Activated CD4-positive, alpha-beta T cell treated with anti-CD3 and anti-CD28 coated beads for 36 hours (primary cell): ENCODE measurements at regions of chr4 and their contacts with region 1.

Region 1: DNA sequence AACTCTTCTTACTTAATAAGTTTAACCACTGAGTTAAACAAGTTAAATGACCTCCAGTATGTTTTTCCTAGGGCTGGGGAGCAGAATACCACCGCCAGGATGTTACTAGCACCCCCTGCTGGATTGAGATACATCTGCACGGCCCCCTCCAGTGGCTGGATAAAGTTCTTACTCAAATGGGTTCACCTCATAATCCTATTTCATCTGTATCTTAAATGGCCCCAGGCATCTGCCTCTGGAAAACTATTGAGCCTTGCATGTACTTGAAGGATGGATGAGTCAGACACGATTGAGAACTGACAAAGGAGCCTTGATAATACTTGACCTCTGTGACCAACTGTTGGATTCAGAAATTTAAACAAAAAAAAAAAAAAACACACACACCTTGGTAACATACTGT is 61.5 kb upstream of the MMAA start:
- DNase-seq: peak; percentile 78
- ATAC-seq: peak; percentile 91
- H3K4me3 Mint-ChIP-seq: no peak overlapping the region
- H3K27ac Mint-ChIP-seq: no peak overlapping the region
- H3K4me1 Mint-ChIP-seq: peaks cover under 1% of the 10 kb centered on the region
- H3K27me3 Mint-ChIP-seq: no peaks in the 10 kb centered on the region

Region 2: GRCh38 chr4:144174401-144175067 is 1383.2 kb before region 1 on chr4:
- CTCF ChIA-PET with region 1: no interaction called
- POLR2A ChIA-PET with region 1: no interaction called
- intact Hi-C with region 1: loop called in 1 of 2 experiments (anchors 5 kb)
- DNase-seq: peak; percentile 42
- ATAC-seq: peak; percentile 84
- H3K4me3 Mint-ChIP-seq: no peak overlapping the region
- H3K27ac Mint-ChIP-seq: peak overlapping the region; percentile 72
- H3K4me1 Mint-ChIP-seq: peaks cover 17% of the 10 kb centered on the region
- H3K27me3 Mint-ChIP-seq: peaks cover 3% of the 10 kb centered on the region

Region 3: DNA sequence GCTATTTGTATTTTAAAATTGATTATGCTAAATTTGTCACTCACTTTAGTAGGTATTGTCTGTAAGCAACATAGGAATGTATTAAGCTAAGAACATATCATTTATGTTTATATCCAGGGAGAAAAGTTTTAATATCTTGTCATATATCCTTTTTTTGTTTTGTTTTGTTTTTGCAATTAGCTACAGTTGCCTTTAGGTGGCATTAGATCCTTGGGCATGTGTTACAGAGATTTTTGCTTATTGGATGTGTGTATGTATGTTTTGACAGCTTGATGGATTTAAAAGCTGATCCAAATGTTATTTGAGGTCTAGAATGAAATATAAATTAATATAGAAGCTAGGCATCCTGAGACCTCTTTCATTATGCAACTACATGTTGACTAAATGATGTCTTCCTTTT is 341.2 kb before region 1 on chr4:
- CTCF ChIA-PET with region 1: interaction called, 4 read pairs
- POLR2A ChIA-PET with region 1: no interaction called
- intact Hi-C with region 1: loop called (anchors 5 kb)
- DNase-seq: no peak
- ATAC-seq: no peak
- H3K4me3 Mint-ChIP-seq: no peak overlapping the region
- H3K27ac Mint-ChIP-seq: no peak overlapping the region
- H3K4me1 Mint-ChIP-seq: no peaks in the 10 kb centered on the region
- H3K27me3 Mint-ChIP-seq: no peaks in the 10 kb centered on the region

Region 4: GRCh38 chr4:145234091-145234706 is 323.5 kb before region 1 on chr4:
- CTCF ChIA-PET with region 1: interaction called, 22 read pairs
- POLR2A ChIA-PET with region 1: no interaction called
- intact Hi-C with region 1: loop called (anchors 1 kb)
- DNase-seq: peak; percentile 78
- ATAC-seq: peak; percentile 98
- H3K4me3 Mint-ChIP-seq: no peak overlapping the region
- H3K27ac Mint-ChIP-seq: no peak overlapping the region
- H3K4me1 Mint-ChIP-seq: no peaks in the 10 kb centered on the region
- H3K27me3 Mint-ChIP-seq: no peaks in the 10 kb centered on the region

Region 5: GRCh38 chr4:145609481-145610427 is 52.0 kb after region 1 on chr4:
- CTCF ChIA-PET with region 1: interaction called, 4 read pairs
- POLR2A ChIA-PET with region 1: no interaction called
- intact Hi-C with region 1: loop called in 1 of 2 experiments (anchors 2 kb)
- DNase-seq: peak; percentile 82
- ATAC-seq: peak; percentile 76
- H3K4me3 Mint-ChIP-seq: no peak overlapping the region
- H3K27ac Mint-ChIP-seq: no peak overlapping the region
- H3K4me1 Mint-ChIP-seq: peaks cover 13% of the 10 kb centered on the region
- H3K27me3 Mint-ChIP-seq: peaks cover 2% of the 10 kb centered on the region

Region 6: GRCh38 chr4:147173797-147174432 is 1616.2 kb after region 1 on chr4:
- CTCF ChIA-PET with region 1: no interaction called
- POLR2A ChIA-PET with region 1: no interaction called
- intact Hi-C with region 1: no loop called
- DNase-seq: no peak
- ATAC-seq: no peak
- H3K4me3 Mint-ChIP-seq: no peak overlapping the region
- H3K27ac Mint-ChIP-seq: no peak overlapping the region
- H3K4me1 Mint-ChIP-seq: no peaks in the 10 kb centered on the region
- H3K27me3 Mint-ChIP-seq: peaks cover 5% of the 10 kb centered on the region